Activated CD4-positive, alpha-beta T cell treated with anti-CD3 and anti-CD28 coated beads for 36 hours (primary cell): ENCODE measurements at regions of chr5 and their contacts with region 1.

Region 1: DNA sequence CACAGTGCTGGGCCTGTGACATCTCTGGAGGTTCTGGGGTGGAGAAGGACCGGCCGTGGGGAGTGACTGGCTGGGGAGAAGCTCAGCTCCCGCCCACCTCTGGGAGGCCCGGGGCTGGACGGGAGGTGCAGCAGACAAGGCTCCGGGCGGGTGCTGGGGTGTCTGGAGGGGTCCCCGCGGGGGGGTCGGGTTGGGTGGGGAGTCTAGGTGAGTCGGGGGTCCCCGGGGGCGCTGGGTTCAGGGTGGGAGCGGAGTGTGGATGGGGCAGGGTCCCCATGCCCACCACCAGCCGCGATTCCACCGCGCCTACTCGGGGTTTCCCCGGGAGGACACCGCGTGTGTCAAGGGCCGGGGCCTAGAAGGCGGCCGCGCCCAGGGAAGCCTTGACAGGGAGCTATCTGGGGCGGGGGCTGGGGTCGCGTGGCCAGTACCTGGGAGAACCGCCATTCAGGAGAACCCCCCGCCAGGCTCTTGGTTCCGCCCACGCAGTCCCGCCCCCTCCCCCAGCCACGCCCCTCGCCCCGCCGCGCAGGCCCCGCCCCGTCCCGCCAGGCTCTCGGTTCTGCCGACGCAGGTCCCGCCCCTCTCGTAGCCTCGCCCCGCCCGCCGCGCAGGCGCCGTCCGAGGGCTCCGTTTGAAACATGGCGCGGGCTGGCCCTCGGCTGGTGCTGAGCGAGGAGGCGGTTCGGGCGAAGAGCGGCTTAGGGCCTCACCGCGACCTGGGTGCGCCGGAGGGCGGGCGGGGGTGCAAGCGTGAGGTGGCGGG is at the start of gene CEP72:
- DNase-seq: peak; percentile 97
- ATAC-seq: peak; percentile 97
- H3K4me3 Mint-ChIP-seq: peak within 1 kb of the TSS; percentile 79
- H3K27ac Mint-ChIP-seq: peak within 1 kb of the TSS; percentile 79
- H3K4me1 Mint-ChIP-seq: peaks cover 53% of the 10 kb centered on the region
- H3K27me3 Mint-ChIP-seq: peaks cover 5% of the 10 kb centered on the region
- total RNA-seq, gene CEP72: 23.7 to 26.4 TPM

Region 2: DNA sequence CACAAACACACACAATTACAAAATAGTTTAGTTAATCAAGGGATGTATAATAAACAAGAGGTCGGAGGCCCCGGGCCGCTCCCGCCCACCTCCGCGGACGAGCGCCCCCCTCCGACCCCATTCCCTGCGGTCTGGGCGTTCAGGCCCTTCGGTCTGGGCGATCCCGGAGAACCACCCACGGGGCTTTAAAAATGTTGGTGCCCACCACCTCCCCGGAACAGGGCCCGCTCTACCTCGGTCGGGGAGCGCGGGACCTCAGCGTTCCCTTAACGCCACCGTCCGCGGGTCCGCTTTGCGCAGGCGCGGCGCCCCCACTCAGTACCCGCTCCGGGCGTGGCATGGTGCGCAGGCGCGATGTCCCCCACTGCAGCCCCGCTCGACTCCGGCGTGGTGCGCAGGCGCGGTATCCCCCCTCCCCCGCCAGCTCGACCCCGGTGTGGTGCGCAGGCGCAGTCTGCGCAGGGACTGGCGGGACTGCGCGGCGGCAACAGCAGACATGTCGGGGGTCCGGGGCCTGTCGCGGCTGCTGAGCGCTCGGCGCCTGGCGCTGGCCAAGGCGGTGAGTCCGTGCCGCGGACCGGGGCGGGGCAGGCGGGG is 393.9 kb before region 1 on chr5 and contains the starts of genes CCDC127 and SDHA:
- CTCF ChIA-PET with region 1: no interaction called
- POLR2A ChIA-PET with region 1: no interaction called
- intact Hi-C with region 1: loop called in 1 of 2 experiments (anchors 2 kb)
- DNase-seq: peak; percentile 99
- ATAC-seq: peak; percentile 84
- H3K4me3 Mint-ChIP-seq: peak within 1 kb of the TSS; percentile 94
- H3K27ac Mint-ChIP-seq: peak within 1 kb of the TSS; percentile 89
- H3K4me1 Mint-ChIP-seq: peaks cover 60% of the 10 kb centered on the region
- H3K27me3 Mint-ChIP-seq: no peaks in the 10 kb centered on the region
- total RNA-seq, gene CCDC127: 6.0 to 7.0 TPM
- total RNA-seq, gene SDHA: 104 to 121 TPM

Region 3: GRCh38 chr5:317086-317811 is 294.7 kb before region 1 on chr5:
- CTCF ChIA-PET with region 1: interaction called, 3 read pairs
- POLR2A ChIA-PET with region 1: no interaction called
- intact Hi-C with region 1: loop called (anchors 1 to 5 kb)
- DNase-seq: peak; percentile 79
- ATAC-seq: peak; percentile 74
- H3K4me3 Mint-ChIP-seq: no peak overlapping the region
- H3K27ac Mint-ChIP-seq: no peak overlapping the region
- H3K4me1 Mint-ChIP-seq: peaks cover 11% of the 10 kb centered on the region
- H3K27me3 Mint-ChIP-seq: peaks cover 11% of the 10 kb centered on the region

Region 4: DNA sequence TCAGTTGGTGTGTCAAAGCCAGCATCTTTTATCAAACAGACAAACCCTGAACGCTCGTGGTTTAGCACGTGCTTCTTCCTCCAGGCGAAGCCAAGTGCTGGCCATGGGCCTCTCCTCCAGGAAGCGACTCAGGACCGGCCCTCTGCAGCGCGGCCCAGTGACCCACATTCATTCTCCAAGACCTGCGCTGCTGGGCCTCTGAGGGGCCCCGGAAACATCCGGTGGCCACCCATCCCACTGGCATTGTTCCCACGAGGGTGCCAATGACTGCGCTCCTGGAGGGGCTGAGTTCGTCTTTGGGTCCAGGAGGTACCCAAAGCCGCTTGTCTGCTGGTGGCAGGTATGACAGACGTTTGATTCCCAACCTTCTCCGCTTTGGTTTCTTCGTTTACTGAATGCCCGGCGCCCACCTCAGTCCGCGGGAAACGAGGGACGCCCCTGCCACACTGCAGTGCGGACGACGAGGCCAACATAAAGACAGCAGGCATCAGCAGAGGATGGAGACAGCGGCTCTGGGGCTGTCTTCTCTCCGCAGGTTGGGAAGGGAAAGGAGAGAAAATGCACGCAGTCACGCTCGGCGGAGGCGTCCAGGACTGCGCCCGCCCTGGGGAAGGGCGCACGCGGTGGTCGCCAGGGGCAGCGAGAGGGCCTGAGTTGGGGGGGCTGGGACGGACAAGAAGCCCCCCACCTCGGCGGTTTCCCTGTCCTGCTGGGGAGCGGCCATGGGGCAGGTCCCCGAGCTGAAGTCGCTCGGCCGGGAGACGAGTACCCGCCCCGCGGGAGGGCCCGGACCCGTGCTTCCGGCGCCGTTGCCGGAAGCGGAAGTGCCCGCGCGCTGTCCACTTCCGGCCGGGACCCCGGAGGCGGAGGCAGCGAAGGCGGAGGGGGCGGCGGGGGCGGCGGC is 169.3 kb before region 1 on chr5 and contains the start of gene EXOC3:
- CTCF ChIA-PET with region 1: no interaction called
- POLR2A ChIA-PET with region 1: no interaction called
- intact Hi-C with region 1: loop called in 1 of 2 experiments (anchors 1 kb)
- DNase-seq: peak; percentile 83
- ATAC-seq: peak; percentile 88
- H3K4me3 Mint-ChIP-seq: peak within 1 kb of the TSS; percentile 87
- H3K27ac Mint-ChIP-seq: peak within 1 kb of the TSS; percentile 92
- H3K4me1 Mint-ChIP-seq: peaks cover 37% of the 10 kb centered on the region
- H3K27me3 Mint-ChIP-seq: no peaks in the 10 kb centered on the region
- total RNA-seq, gene EXOC3: 49.7 to 62.7 TPM

Region 5: GRCh38 chr5:586751-587285 is 25.1 kb before region 1 on chr5:
- CTCF ChIA-PET with region 1: no interaction called
- POLR2A ChIA-PET with region 1: no interaction called
- intact Hi-C with region 1: no loop called
- DNase-seq: no peak
- ATAC-seq: no peak
- H3K4me3 Mint-ChIP-seq: no peak overlapping the region
- H3K27ac Mint-ChIP-seq: no peak overlapping the region
- H3K4me1 Mint-ChIP-seq: no peaks in the 10 kb centered on the region
- H3K27me3 Mint-ChIP-seq: peaks cover 25% of the 10 kb centered on the region

Region 6: DNA sequence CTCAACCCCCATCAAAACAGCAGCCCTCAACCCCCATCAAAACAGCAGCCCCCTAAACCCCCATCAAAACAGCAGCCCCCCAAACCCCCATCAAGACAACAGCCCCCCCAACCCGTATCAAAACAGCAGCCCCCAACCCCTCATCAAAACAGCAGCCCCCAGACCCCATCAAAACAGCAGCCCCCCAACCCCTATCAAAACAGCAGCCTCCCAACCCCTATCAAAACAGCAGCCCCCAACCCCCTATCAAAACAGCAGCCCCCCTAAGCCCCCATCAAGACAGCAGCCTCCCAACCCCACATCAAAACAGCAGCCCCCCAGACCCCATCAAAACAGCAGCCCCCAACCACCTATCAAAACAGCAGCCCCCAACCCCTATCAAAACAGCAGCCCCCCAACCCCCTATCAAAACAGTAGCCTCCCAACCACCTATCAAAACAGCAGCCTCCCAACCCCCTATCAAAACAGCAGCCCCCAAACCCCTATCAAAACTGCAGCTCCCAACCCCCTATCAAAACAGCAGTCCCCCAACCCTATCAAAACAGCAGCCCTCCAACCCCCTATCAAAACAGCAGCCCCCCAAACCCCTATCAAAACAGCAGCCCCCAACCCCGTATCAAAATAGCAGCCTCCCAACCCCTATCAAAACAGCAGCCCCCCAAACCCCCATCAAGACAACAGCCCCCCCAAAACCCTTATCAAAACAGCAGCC is 80.1 kb after region 1 on chr5:
- CTCF ChIA-PET with region 1: no interaction called
- POLR2A ChIA-PET with region 1: no interaction called
- intact Hi-C with region 1: loop called in 1 of 2 experiments (anchors 2 kb)
- DNase-seq: no peak
- ATAC-seq: no peak
- H3K4me3 Mint-ChIP-seq: peak overlapping the region; percentile 19
- H3K27ac Mint-ChIP-seq: no peak overlapping the region
- H3K4me1 Mint-ChIP-seq: no peaks in the 10 kb centered on the region
- H3K27me3 Mint-ChIP-seq: peaks cover 3% of the 10 kb centered on the region

Region 7: GRCh38 chr5:1344975-1345838 is 733.3 kb after region 1 on chr5 and contains the start of gene CLPTM1L:
- CTCF ChIA-PET with region 1: no interaction called
- POLR2A ChIA-PET with region 1: no interaction called
- intact Hi-C with region 1: loop called in 1 of 2 experiments (anchors 10 kb)
- DNase-seq: peak; percentile 93
- ATAC-seq: peak; percentile 96
- H3K4me3 Mint-ChIP-seq: peak within 1 kb of the TSS; percentile 94
- H3K27ac Mint-ChIP-seq: peak within 1 kb of the TSS; percentile 92
- H3K4me1 Mint-ChIP-seq: peaks cover 22% of the 10 kb centered on the region
- H3K27me3 Mint-ChIP-seq: no peaks in the 10 kb centered on the region
- total RNA-seq, gene CLPTM1L: 62.1 to 62.2 TPM